K562 (cell line): ENCODE measurements at regions of chr3 and their contacts with region 1.

Region 1: DNA sequence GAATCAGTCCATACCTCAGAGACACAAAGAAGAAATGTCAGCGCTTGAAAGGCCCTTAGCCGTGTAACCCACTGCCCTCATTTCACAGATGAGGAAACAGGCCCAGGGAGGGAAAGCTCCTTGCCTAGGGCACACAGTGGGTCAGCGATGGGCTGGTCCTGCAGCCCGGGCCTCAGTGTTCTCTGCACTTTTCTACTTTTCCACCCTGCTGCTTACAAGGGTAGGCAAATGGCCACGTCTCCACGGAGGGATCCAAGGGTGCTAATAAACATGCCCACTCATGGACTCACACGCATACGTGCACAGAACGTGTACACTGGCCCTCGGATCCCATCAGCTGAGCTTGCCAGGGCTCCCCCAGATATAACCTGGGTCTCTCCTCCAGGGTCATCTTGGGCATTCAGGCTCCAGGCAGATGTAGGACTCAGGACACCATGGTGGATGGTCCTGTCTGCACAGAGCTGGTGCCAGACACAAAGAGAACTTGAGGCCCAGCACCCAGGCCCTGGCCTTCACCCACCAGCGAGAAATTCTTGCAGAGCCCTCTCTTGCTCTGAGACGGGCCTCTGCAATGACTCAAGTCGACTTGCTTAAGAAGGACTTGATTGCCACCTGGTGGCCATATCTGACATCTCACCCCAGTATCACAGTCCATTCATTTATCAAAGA is 34.5 kb upstream of the VPS8 start:
- DNase-seq: peak; percentile 81 to 90 (median 82)
- ATAC-seq: peak; percentile 97
- H3K4me3 ChIP-seq: no peak overlapping the region
- H3K27ac ChIP-seq: no peak overlapping the region
- H3K4me1 ChIP-seq: peaks cover 0 to 9% of the 10 kb centered on the region in 2 experiments; a peak in 1 of 5 replicates
- H3K27me3 ChIP-seq: peaks cover 35 to 66% of the 10 kb centered on the region in 2 experiments
- CTCF ChIP-seq: peak; percentile 78 to 93 (median 89)
- EP300 ChIP-seq: no peak
- POLR2A ChIP-seq: no peak
- RAD21 ChIP-seq: peak; percentile 91 to 99

Region 2: GRCh38 chr3:184561061-184561912 is 216.2 kb before region 1 on chr3 and contains the start of gene EPHB3:
- CTCF ChIA-PET with region 1: interaction called, 3 read pairs
- POLR2A ChIA-PET with region 1: interaction called, 7 read pairs
- in situ Hi-C with region 1: no loop called
- intact Hi-C with region 1: loop called (anchors 1 kb)
- DNase-seq: peak; percentile 83 to 89 (median 88)
- ATAC-seq: peak; percentile 96
- H3K4me3 ChIP-seq: no peak within 1 kb of the TSS
- H3K27ac ChIP-seq: no peak within 1 kb of the TSS
- H3K4me1 ChIP-seq: peaks cover 0 to 8% of the 10 kb centered on the region in 2 experiments; a peak in 2 of 5 replicates
- H3K27me3 ChIP-seq: peaks cover 19 to 71% of the 10 kb centered on the region in 2 experiments
- CTCF ChIP-seq: peak; percentile 96 to 100 (median 99)
- EP300 ChIP-seq: no peak
- POLR2A ChIP-seq: no peak
- RAD21 ChIP-seq: peak; percentile 93 to 99
- polyA plus RNA-seq, gene EPHB3: not detected

Region 3: GRCh38 chr3:184727357-184728009 is 50.0 kb before region 1 on chr3:
- CTCF ChIA-PET with region 1: no interaction called
- POLR2A ChIA-PET with region 1: no interaction called
- in situ Hi-C with region 1: no loop called
- intact Hi-C with region 1: loop called (anchors 5 kb)
- DNase-seq: peak; percentile 72 to 79 (median 73)
- ATAC-seq: peak; percentile 97
- H3K4me3 ChIP-seq: no peak overlapping the region
- H3K27ac ChIP-seq: no peak overlapping the region
- H3K4me1 ChIP-seq: no peaks in the 10 kb centered on the region
- H3K27me3 ChIP-seq: peaks cover 14 to 31% of the 10 kb centered on the region in 2 experiments; a peak in 4 of 5 replicates
- CTCF ChIP-seq: peak; percentile 78 to 92 (median 80)
- EP300 ChIP-seq: no peak
- POLR2A ChIP-seq: no peak
- RAD21 ChIP-seq: peak; percentile 23 to 69; a peak in 3 of 4 replicates

Region 4: GRCh38 chr3:184808021-184808420 is 30.6 kb after region 1 on chr3:
- CTCF ChIA-PET with region 1: interaction called, 3 read pairs
- POLR2A ChIA-PET with region 1: interaction called, 3 read pairs
- in situ Hi-C with region 1: no loop called
- intact Hi-C with region 1: loop called (anchors 1 kb)
- DNase-seq: peak in 1 of 4 experiments; percentile 40
- ATAC-seq: peak; percentile 52
- H3K4me3 ChIP-seq: no peak overlapping the region
- H3K27ac ChIP-seq: no peak overlapping the region
- H3K4me1 ChIP-seq: peaks cover 6 to 16% of the 10 kb centered on the region in 2 experiments
- H3K27me3 ChIP-seq: no peaks in the 10 kb centered on the region; a peak in 1 of 5 replicates
- CTCF ChIP-seq: peak; percentile 41 to 56 (median 54)
- EP300 ChIP-seq: no peak
- POLR2A ChIP-seq: no peak
- RAD21 ChIP-seq: no peak; a peak in 1 of 4 replicates

Region 5: GRCh38 chr3:185089343-185089742 is 311.9 kb after region 1 on chr3:
- CTCF ChIA-PET with region 1: no interaction called
- POLR2A ChIA-PET with region 1: no interaction called
- in situ Hi-C with region 1: no loop called
- intact Hi-C with region 1: no loop called
- DNase-seq: no peak
- ATAC-seq: no peak
- H3K4me3 ChIP-seq: no peak overlapping the region
- H3K27ac ChIP-seq: no peak overlapping the region
- H3K4me1 ChIP-seq: no peaks in the 10 kb centered on the region
- H3K27me3 ChIP-seq: peaks cover 16 to 19% of the 10 kb centered on the region in 2 experiments; a peak in 4 of 5 replicates
- CTCF ChIP-seq: no peak
- EP300 ChIP-seq: no peak
- POLR2A ChIP-seq: no peak
- RAD21 ChIP-seq: no peak